ENCODE measurements at regions of chr5 and their contacts with region 1.

Region 1: GRCh38 chr5:109788596-109788995 is 98.9 kb downstream of the MAN2A1 start:
- DNase-seq: no peak
- ATAC-seq: peak; percentile 63
- H3K4me3 Mint-ChIP-seq: no peak overlapping the region
- H3K27ac Mint-ChIP-seq: no peak overlapping the region
- H3K4me1 Mint-ChIP-seq: peaks cover 22% of the 10 kb centered on the region
- H3K27me3 Mint-ChIP-seq: no peaks in the 10 kb centered on the region

Region 2: DNA sequence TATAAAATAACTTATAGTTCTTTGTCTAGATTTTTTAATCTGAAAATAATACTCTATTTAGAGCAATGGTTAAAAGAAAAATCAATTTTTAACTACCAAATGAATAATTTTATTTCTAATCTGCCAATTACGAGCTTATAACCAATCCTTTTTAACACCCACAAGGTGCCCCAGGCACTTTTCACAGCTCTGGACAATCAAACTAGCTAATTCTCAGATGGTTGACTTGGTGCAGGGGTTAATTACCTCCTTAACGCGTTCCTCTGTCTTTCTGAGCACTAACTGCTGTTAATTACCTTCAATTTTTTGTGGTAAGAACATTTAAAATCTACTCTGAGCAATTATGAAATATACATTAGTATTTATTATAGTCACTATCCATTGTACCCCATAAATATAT is 269.2 kb before region 1 on chr5:
- CTCF ChIA-PET with region 1: no interaction called
- POLR2A ChIA-PET with region 1: no interaction called
- intact Hi-C with region 1: no loop called
- DNase-seq: no peak
- ATAC-seq: no peak
- H3K4me3 Mint-ChIP-seq: no peak overlapping the region
- H3K27ac Mint-ChIP-seq: no peak overlapping the region
- H3K4me1 Mint-ChIP-seq: no peaks in the 10 kb centered on the region
- H3K27me3 Mint-ChIP-seq: no peaks in the 10 kb centered on the region

Region 3: DNA sequence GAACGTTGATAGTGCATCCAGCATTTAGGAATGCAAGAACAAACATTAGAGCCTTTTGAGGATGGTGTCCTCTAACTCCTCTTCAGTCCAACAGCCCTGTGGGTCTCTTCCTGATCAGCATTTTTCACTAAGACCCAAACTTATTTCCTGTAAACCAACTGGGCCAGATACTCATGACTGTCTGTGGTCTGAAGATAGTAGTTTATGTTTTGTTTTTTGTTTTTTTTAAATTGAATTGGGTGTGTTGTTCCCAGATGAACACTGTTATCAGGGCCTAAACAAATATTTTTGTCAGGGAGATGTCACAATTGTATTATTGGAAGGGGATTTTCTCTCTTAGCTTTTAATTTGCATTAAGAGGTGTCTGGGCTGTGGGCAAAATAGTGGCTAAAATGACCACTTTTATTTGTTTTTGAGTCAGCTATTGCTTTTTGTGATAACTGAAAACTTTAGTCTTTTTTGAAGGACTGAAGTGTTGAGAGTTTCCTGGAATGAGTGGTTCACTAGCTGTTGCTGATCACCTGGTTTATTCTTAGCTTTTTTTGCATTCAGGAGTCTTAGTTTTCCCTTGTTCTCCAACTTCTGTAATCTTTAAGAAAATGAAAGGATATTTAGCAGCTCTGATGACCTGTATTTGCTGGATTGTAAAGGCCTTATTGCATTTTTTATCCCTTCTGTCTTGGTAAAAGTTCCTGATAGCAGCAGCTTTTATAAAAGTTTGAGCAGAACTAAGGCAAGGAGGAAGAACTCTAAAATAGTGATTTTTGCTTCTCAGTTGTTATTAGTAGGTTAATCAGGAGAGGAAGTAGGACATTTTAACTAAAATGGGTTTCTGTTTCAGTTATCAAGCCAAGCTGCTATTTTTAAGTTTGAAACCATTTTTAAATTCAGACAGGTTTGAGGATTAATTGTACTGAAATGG is 93.3 kb before region 1 on chr5:
- CTCF ChIA-PET with region 1: no interaction called
- POLR2A ChIA-PET with region 1: no interaction called
- intact Hi-C with region 1: loop called in 1 of 2 experiments (anchors 5 kb)
- DNase-seq: no peak
- ATAC-seq: no peak
- H3K4me3 Mint-ChIP-seq: no peak overlapping the region
- H3K27ac Mint-ChIP-seq: peak overlapping the region; percentile 2
- H3K4me1 Mint-ChIP-seq: peaks cover 85% of the 10 kb centered on the region
- H3K27me3 Mint-ChIP-seq: no peaks in the 10 kb centered on the region

Measured in activated CD4-positive, alpha-beta T cell treated with anti-CD3 and anti-CD28 coated beads for 36 hours (primary cell).